Left cardiac atrium (tissue), 4 donors: ENCODE measurements at regions of chr18 and their contacts with region 1.

Region 1: GRCh38 chr18:45324495-45325113 is 290.7 kb upstream of the SLC14A2 start:
- DNase-seq: peak; percentile 70
- ATAC-seq: peak; percentile 82 to 84

Region 2: GRCh38 chr18:45255197-45255890 is 69.3 kb before region 1 on chr18:
- intact Hi-C with region 1: loop called in 1 of 2 experiments (anchors 2 kb)
- DNase-seq: no peak
- ATAC-seq: peak; percentile 70 to 72